Dendritic cell treated with granulocyte-macrophage colony-stimulating factor and Interleukin-4, amounts not matched to agents 40 ng/mL and 50 ng/mL, for 4 days (primary cell): ENCODE measurements at regions of chr17 and their contacts with region 1.

Region 1: GRCh38 chr17:29504711-29505110 is 62.1 kb downstream of the ABHD15 start:
- H3K4me3 Mint-ChIP-seq: no peak overlapping the region
- H3K27ac Mint-ChIP-seq: no peak overlapping the region
- H3K4me1 Mint-ChIP-seq: peaks cover 10% of the 10 kb centered on the region
- H3K27me3 Mint-ChIP-seq: no peaks in the 10 kb centered on the region

Region 2: GRCh38 chr17:29451121-29451742 is 53.5 kb before region 1 on chr17:
- intact Hi-C with region 1: loop called (anchors 10 kb)
- H3K4me3 Mint-ChIP-seq: no peak overlapping the region
- H3K27ac Mint-ChIP-seq: no peak overlapping the region
- H3K4me1 Mint-ChIP-seq: peaks cover 19% of the 10 kb centered on the region
- H3K27me3 Mint-ChIP-seq: no peaks in the 10 kb centered on the region

Region 3: DNA sequence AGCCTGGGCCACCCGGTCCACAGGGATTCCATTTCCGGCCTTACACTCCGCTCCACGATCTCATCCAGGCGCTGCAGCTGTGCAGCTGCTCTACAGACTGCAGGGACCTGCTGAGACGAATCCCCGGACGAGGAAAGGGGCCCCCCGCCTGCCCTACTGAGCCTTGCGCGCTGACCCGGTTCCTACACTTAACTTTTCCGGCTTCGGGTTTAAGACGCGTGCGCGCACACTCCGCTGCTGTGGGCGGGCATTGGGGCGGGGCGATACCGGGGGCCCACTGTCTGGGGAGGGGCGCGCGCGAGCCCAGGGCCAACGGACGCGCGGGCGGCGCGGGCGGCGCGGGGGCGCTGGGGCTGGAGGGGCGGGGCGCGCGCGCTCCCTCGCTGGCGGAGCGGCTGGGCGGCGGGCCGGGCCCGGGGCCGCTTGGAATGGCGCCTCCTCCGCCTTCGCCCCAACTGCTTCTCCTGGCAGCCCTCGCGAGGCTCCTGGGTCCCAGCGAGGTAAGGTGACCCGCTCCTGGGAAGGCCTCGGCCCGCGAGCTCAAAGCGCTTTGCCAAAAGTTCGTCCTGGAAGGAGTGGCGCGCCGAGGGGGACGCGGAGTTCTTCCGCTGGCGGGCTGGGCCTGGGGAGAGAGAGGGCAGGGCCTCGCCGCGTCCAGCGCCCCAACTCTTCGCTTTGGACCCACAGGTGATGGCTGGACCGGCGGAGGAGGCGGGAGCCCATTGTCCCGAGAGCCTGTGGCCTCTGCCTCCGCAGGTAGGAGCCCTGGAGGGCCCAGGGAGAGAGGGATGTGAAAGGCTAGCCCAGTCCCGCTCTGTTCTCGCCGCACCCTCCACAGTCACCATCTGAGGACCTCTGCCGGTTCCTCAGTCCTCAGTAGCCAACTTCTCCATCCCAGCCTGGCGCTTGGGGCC is 63.9 kb after region 1 on chr17 and contains the start of gene TP53I13:
- intact Hi-C with region 1: no loop called
- H3K4me3 Mint-ChIP-seq: peak within 1 kb of the TSS; percentile 98
- H3K27ac Mint-ChIP-seq: peak within 1 kb of the TSS; percentile 95
- H3K4me1 Mint-ChIP-seq: peaks cover 62% of the 10 kb centered on the region
- H3K27me3 Mint-ChIP-seq: no peaks in the 10 kb centered on the region

Region 4: GRCh38 chr17:29591737-29592624 is 87.3 kb after region 1 on chr17:
- intact Hi-C with region 1: no loop called
- H3K4me3 Mint-ChIP-seq: peak overlapping the region; percentile 73
- H3K27ac Mint-ChIP-seq: peak overlapping the region; percentile 71
- H3K4me1 Mint-ChIP-seq: peaks cover 71% of the 10 kb centered on the region
- H3K27me3 Mint-ChIP-seq: peaks cover 39% of the 10 kb centered on the region

Region 5: DNA sequence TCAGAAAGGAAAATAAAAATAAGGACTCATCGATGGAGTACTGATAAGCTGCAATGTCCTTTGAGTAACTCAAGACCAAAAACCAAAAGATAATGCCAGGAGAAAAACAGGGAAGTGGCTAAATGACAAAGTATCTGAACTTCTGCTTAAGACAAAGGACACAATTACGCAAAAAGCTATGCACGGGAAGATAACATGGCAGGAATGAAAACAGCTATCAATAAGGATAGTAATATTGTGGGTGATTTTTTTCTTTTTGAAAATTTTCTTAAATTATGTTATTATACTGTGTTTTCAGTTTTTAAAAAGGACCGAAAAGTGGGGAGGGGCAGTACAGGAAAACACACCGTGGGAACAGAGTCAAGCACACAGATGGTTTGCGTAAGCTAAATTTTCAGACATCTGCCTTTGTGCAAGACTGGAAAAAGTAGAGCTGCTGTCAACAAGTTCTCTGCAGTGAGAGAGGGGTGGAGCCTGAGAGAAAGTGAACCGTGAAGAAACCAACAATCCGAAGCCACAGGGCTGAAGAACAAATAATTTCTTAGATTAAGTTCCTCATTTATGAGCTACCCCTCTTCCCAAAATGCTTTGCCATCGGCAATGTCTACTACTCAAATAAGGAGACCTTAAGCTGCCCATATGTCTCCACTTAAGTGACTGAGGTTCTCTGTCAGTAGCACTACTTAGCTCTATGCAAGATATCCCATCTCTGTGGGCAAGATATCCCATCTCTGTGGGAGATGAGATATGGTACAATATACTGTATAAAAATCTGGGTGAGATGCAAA is 217.9 kb after region 1 on chr17:
- intact Hi-C with region 1: no loop called
- H3K4me3 Mint-ChIP-seq: peak overlapping the region; percentile 58
- H3K27ac Mint-ChIP-seq: peak overlapping the region; percentile 89
- H3K4me1 Mint-ChIP-seq: peaks cover 71% of the 10 kb centered on the region
- H3K27me3 Mint-ChIP-seq: no peaks in the 10 kb centered on the region